K562 (cell line): ENCODE measurements at regions of chr3 and their contacts with region 1.

Region 1: GRCh38 chr3:45665101-45665572 is 24.1 kb upstream of the SACM1L start:
- DNase-seq: peak; percentile 78 to 92 (median 82)
- ATAC-seq: peak; percentile 88
- H3K4me3 ChIP-seq: no peak overlapping the region
- H3K27ac ChIP-seq: no peak overlapping the region; the same call in 2 of the 3 replicates
- H3K4me1 ChIP-seq: peaks cover 6 to 35% of the 10 kb centered on the region in 2 experiments; a peak in 4 of 5 replicates
- H3K27me3 ChIP-seq: no peaks in the 10 kb centered on the region
- CTCF ChIP-seq: peak; percentile 95 to 99 (median 99)
- EP300 ChIP-seq: no peak
- POLR2A ChIP-seq: no peak
- RAD21 ChIP-seq: peak; percentile 51 to 82

Region 2: GRCh38 chr3:45516829-45517228 is 148.3 kb before region 1 on chr3:
- CTCF ChIA-PET with region 1: interaction called, 17 read pairs
- POLR2A ChIA-PET with region 1: interaction called, 4 read pairs
- in situ Hi-C with region 1: loop called (anchors 5 kb)
- intact Hi-C with region 1: no loop called
- DNase-seq: no peak
- ATAC-seq: no peak
- H3K4me3 ChIP-seq: no peak overlapping the region
- H3K27ac ChIP-seq: no peak overlapping the region
- H3K4me1 ChIP-seq: no peaks in the 10 kb centered on the region
- H3K27me3 ChIP-seq: no peaks in the 10 kb centered on the region
- CTCF ChIP-seq: no peak
- EP300 ChIP-seq: no peak
- POLR2A ChIP-seq: no peak
- RAD21 ChIP-seq: no peak

Region 3: DNA sequence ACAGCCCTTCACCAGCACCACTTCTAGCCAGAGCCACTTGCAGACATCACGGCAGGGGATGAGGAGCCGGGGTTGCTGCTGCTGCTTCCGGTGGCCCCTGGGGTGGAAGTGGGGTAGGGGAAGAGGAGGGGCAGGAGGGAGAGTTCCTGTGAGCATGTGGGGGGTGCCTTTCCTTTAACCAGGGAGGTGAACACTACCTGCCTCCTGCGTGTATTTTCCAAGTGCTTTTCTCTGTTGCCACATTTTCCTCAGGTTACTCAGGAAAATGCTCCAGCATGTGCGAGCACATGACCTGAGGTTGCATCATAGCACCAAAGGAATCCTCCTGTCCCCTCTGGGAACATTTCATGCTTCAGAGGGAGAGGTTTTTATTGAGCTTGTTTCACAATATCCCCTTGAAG is 11.9 kb after region 1 on chr3:
- CTCF ChIA-PET with region 1: no interaction called
- POLR2A ChIA-PET with region 1: interaction called, 12 read pairs
- in situ Hi-C with region 1: no loop called
- intact Hi-C with region 1: no loop called
- DNase-seq: no peak
- ATAC-seq: peak; percentile 27; the same call in 2 of the 3 replicates
- H3K4me3 ChIP-seq: no peak overlapping the region
- H3K27ac ChIP-seq: no peak overlapping the region
- H3K4me1 ChIP-seq: no peaks in the 10 kb centered on the region
- H3K27me3 ChIP-seq: no peaks in the 10 kb centered on the region
- CTCF ChIP-seq: no peak
- EP300 ChIP-seq: no peak
- POLR2A ChIP-seq: no peak
- RAD21 ChIP-seq: no peak

Region 4: DNA sequence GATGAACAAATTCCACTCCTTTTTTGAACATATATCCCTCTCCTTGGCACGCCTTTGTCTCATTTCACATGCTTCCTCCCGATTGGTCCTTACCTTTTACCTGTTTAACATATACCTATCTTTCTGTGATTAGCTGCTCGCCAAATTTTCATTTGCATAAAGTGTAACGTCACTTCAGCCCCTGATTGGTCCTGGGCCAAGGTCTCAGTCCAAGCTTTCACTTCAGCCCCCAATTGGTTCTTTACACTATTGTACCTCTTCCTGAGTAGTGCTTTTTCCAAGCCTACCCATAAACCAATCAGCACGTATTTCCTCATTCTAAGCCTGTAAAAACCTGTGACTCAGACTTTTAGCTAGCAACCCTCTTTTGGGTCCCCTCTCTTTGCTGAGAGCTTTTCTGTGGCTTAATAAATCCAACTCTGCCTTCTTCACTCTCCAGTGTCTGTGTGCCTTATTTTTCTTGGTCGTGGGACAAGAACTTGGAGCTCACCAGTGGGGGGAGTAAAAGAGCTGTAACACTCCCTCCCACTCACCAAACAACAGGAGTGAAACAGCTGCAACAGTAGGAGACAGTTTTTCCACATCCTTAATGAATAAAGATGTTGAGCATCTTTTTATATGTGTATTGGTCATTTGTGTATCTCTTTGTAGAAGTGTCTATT is 362.7 kb after region 1 on chr3:
- CTCF ChIA-PET with region 1: no interaction called
- POLR2A ChIA-PET with region 1: no interaction called
- in situ Hi-C with region 1: no loop called
- intact Hi-C with region 1: no loop called
- DNase-seq: peak in 1 of 4 experiments; percentile 38
- ATAC-seq: peak; percentile 50; the same call in 1 of the 3 replicates
- H3K4me3 ChIP-seq: no peak overlapping the region
- H3K27ac ChIP-seq: no peak overlapping the region
- H3K4me1 ChIP-seq: peaks cover 2 to 5% of the 10 kb centered on the region in 2 experiments; a peak in 3 of 5 replicates
- H3K27me3 ChIP-seq: peaks cover 0 to 17% of the 10 kb centered on the region in 2 experiments; a peak in 3 of 5 replicates
- CTCF ChIP-seq: peak in 2 of 3 experiments; percentile 23 to 30; a peak in 2 of 6 replicates
- EP300 ChIP-seq: no peak
- POLR2A ChIP-seq: no peak
- RAD21 ChIP-seq: peak; percentile 14 to 23; a peak in 1 of 4 replicates